IMR-90 (cell line): ENCODE measurements at regions of chr6 and their contacts with region 1.

Region 1: GRCh38 chr6:11770546-11771466 is 7.8 kb downstream of the ADTRP start:
- DNase-seq: peak; percentile 100
- ATAC-seq: peak; percentile 81
- H3K4me3 ChIP-seq: no peak overlapping the region
- H3K27ac ChIP-seq: peak overlapping the region; percentile 81
- H3K4me1 ChIP-seq: peaks cover 36% of the 10 kb centered on the region
- H3K27me3 ChIP-seq: no peaks in the 10 kb centered on the region
- CTCF ChIP-seq: no peak
- POLR2A ChIP-seq: peak; percentile 74; the same call in 1 of the 2 replicates
- RAD21 ChIP-seq: no peak; the same call in none of the 2 replicates

Region 2: GRCh38 chr6:11711003-11711983 is 59.5 kb before region 1 on chr6:
- CTCF ChIA-PET with region 1: no interaction called
- POLR2A ChIA-PET with region 1: no interaction called
- dilution Hi-C with region 1: no loop called
- in situ Hi-C with region 1: no loop called
- intact Hi-C with region 1: loop called (anchors 5 kb)
- DNase-seq: peak; percentile 80
- ATAC-seq: peak; percentile 80
- H3K4me3 ChIP-seq: no peak overlapping the region
- H3K27ac ChIP-seq: peak overlapping the region; percentile 25
- H3K4me1 ChIP-seq: peaks cover 26% of the 10 kb centered on the region
- H3K27me3 ChIP-seq: no peaks in the 10 kb centered on the region
- CTCF ChIP-seq: no peak
- POLR2A ChIP-seq: peak; percentile 43; the same call in 1 of the 2 replicates
- RAD21 ChIP-seq: no peak

Region 3: GRCh38 chr6:11815231-11815630 is 44.4 kb after region 1 on chr6:
- CTCF ChIA-PET with region 1: interaction called, 4 read pairs
- POLR2A ChIA-PET with region 1: no interaction called
- dilution Hi-C with region 1: no loop called
- in situ Hi-C with region 1: no loop called
- intact Hi-C with region 1: loop called (anchors 5 kb)
- DNase-seq: peak; percentile 87
- ATAC-seq: peak; percentile 88
- H3K4me3 ChIP-seq: no peak overlapping the region
- H3K27ac ChIP-seq: peak overlapping the region; percentile 50
- H3K4me1 ChIP-seq: peaks cover 11% of the 10 kb centered on the region
- H3K27me3 ChIP-seq: no peaks in the 10 kb centered on the region
- CTCF ChIP-seq: no peak
- POLR2A ChIP-seq: no peak
- RAD21 ChIP-seq: no peak

Region 4: DNA sequence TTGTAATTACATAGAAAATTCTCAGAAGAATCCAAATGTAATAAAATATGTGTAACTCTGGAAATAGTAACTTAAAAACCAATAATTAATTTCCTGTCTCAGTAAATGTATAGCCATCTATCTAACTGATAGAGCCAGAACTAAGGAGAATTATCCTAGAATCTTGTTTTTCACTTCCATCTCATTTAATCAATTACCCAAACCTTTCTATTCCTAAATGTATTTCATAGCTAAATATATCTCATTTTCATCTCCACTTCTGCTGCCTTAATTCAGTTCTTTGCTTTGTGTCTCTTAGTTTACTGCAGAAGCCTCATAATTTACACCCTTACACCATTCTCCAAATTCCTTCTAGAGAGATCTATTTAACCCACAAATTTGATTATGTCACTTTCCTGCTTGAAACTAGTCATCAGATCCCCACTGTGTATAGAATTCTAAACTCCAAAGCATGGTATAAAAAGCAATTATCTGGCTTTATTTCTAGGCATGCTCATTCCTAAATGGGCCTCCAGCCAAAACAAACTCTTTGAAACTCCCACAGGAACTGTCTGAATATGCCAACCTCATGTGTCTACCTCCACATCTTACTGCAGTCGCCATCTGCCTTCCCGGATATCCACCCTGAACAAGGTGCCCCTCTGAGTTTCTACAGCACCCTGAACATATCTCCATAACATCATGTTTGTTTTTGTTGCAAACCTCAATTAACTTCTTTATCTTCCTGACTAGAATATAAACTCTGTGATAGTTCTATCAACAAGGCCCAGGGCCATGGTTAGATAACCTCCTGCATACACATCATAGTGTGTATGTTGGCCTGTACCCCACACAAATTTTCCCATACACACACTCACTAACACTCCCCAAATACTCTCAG is 78.3 kb after region 1 on chr6:
- CTCF ChIA-PET with region 1: no interaction called
- POLR2A ChIA-PET with region 1: no interaction called
- dilution Hi-C with region 1: no loop called
- in situ Hi-C with region 1: no loop called
- intact Hi-C with region 1: loop called (anchors 5 kb)
- DNase-seq: peak; percentile 42
- ATAC-seq: peak; percentile 30
- H3K4me3 ChIP-seq: no peak overlapping the region
- H3K27ac ChIP-seq: no peak overlapping the region
- H3K4me1 ChIP-seq: peaks cover 11% of the 10 kb centered on the region
- H3K27me3 ChIP-seq: no peaks in the 10 kb centered on the region
- CTCF ChIP-seq: no peak
- POLR2A ChIP-seq: no peak
- RAD21 ChIP-seq: no peak

Region 5: DNA sequence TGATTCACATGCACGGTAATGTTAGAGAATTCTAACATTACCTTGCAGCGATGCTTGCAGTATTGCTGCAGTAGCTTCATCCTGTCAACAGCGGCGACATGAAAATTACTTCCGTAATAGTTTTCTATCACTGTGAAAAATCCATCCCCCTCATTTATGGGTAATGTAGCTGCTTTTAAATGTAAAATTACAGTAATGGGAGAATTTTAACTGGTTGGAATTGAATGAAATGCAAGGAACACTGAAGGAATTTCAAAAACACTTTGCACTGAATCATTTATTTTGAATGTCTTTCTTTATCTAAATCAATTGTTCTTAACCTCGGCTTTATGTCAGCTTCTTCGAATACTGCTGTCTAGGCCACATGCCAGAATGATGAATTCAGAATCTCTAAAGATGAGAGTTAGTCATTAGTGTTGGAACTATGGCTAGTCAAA is 138.9 kb after region 1 on chr6:
- CTCF ChIA-PET with region 1: no interaction called
- POLR2A ChIA-PET with region 1: no interaction called
- dilution Hi-C with region 1: no loop called
- in situ Hi-C with region 1: no loop called
- intact Hi-C with region 1: loop called (anchors 5 kb)
- DNase-seq: peak; percentile 72
- ATAC-seq: peak; percentile 40
- H3K4me3 ChIP-seq: no peak overlapping the region
- H3K27ac ChIP-seq: no peak overlapping the region
- H3K4me1 ChIP-seq: no peaks in the 10 kb centered on the region
- H3K27me3 ChIP-seq: no peaks in the 10 kb centered on the region
- CTCF ChIP-seq: no peak
- POLR2A ChIP-seq: no peak
- RAD21 ChIP-seq: no peak

Region 6: GRCh38 chr6:11975353-11975977 is 204.7 kb after region 1 on chr6:
- CTCF ChIA-PET with region 1: no interaction called
- POLR2A ChIA-PET with region 1: no interaction called
- dilution Hi-C with region 1: no loop called
- in situ Hi-C with region 1: no loop called
- intact Hi-C with region 1: no loop called
- DNase-seq: no peak
- ATAC-seq: no peak
- H3K4me3 ChIP-seq: no peak overlapping the region
- H3K27ac ChIP-seq: no peak overlapping the region
- H3K4me1 ChIP-seq: peaks cover 11% of the 10 kb centered on the region
- H3K27me3 ChIP-seq: no peaks in the 10 kb centered on the region
- CTCF ChIP-seq: no peak
- POLR2A ChIP-seq: no peak
- RAD21 ChIP-seq: no peak

Region 7: GRCh38 chr6:12090714-12091113 is 319.9 kb after region 1 on chr6:
- CTCF ChIA-PET with region 1: no interaction called
- POLR2A ChIA-PET with region 1: no interaction called
- dilution Hi-C with region 1: no loop called
- in situ Hi-C with region 1: no loop called
- intact Hi-C with region 1: no loop called
- DNase-seq: no peak
- ATAC-seq: no peak
- H3K4me3 ChIP-seq: no peak overlapping the region
- H3K27ac ChIP-seq: no peak overlapping the region
- H3K4me1 ChIP-seq: peaks cover 2% of the 10 kb centered on the region; the same call in 1 of the 2 replicates
- H3K27me3 ChIP-seq: no peaks in the 10 kb centered on the region
- CTCF ChIP-seq: no peak
- POLR2A ChIP-seq: no peak
- RAD21 ChIP-seq: no peak